ENCODE measurements at regions of chr5 and their contacts with region 1.

Region 1: GRCh38 chr5:150656191-150657132 is 4.6 kb upstream of the MYOZ3 start:
- DNase-seq: peak; percentile 77 to 94
- H3K4me3 ChIP-seq: peak overlapping the region; percentile 51 to 59 (median 54)
- H3K27ac ChIP-seq: peak overlapping the region; percentile 31 to 81 (median 63)
- H3K4me1 ChIP-seq: peaks cover 10 to 63% (median 34%) of the 10 kb centered on the region in 4 donors
- H3K27me3 ChIP-seq: no peaks in the 10 kb centered on the region
- CTCF ChIP-seq: peak in 4 of 7 experiments; percentile 35 to 88 (median 58)
- EP300 ChIP-seq: no peak
- POLR2A ChIP-seq: no peak

Region 2: DNA sequence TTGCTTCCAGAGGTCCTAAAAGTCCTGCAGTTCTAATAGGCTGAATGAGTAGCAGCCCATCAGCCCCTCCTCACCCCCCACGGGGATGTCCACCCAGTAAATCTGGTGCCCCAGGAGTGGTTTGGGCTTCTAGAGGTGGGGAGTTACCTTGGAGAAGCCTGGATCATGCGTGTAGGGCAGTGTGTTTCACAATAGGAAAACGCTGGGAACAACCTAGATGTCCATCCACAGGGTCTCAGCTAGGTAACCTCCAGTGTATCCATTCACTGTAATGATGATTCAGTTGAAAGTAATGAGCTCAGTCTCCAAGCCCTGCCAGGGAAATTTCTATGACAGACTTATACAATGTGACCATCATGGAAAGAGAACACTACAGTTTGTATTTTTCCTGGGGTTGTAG is 96.8 kb before region 1 on chr5:
- intact Hi-C with region 1: loop called (anchors 5 kb)
- DNase-seq: no peak
- H3K4me3 ChIP-seq: no peak overlapping the region
- H3K27ac ChIP-seq: no peak overlapping the region
- H3K4me1 ChIP-seq: peaks cover 0 to 16% (median 7%) of the 10 kb centered on the region in 4 donors
- H3K27me3 ChIP-seq: no peaks in the 10 kb centered on the region
- CTCF ChIP-seq: no peak
- EP300 ChIP-seq: no peak
- POLR2A ChIP-seq: no peak

Region 3: GRCh38 chr5:150567021-150567717 is 89.3 kb before region 1 on chr5:
- intact Hi-C with region 1: loop called (anchors 5 kb)
- DNase-seq: peak in 1 of 2 donors; percentile 53
- H3K4me3 ChIP-seq: no peak overlapping the region
- H3K27ac ChIP-seq: no peak overlapping the region
- H3K4me1 ChIP-seq: peaks cover 0 to 9% (median 0%) of the 10 kb centered on the region in 4 donors
- H3K27me3 ChIP-seq: no peaks in the 10 kb centered on the region
- CTCF ChIP-seq: no peak
- EP300 ChIP-seq: no peak
- POLR2A ChIP-seq: no peak

Measured in stomach (tissue), 19 donors.